ENCODE measurements at regions of chr14 and their contacts with region 1.

Region 1: GRCh38 chr14:34982417-34983147 is at the start of gene SRP54:
- DNase-seq: peak; percentile 97
- ATAC-seq: peak; percentile 91
- H3K4me3 Mint-ChIP-seq: no peak within 1 kb of the TSS
- H3K27ac Mint-ChIP-seq: no peak within 1 kb of the TSS
- H3K4me1 Mint-ChIP-seq: peaks cover 22% of the 10 kb centered on the region
- H3K27me3 Mint-ChIP-seq: no peaks in the 10 kb centered on the region
- CTCF ChIP-seq: no peak
- total RNA-seq, gene SRP54: 51.2 and 54.7 TPM in 2 replicates

Region 2: DNA sequence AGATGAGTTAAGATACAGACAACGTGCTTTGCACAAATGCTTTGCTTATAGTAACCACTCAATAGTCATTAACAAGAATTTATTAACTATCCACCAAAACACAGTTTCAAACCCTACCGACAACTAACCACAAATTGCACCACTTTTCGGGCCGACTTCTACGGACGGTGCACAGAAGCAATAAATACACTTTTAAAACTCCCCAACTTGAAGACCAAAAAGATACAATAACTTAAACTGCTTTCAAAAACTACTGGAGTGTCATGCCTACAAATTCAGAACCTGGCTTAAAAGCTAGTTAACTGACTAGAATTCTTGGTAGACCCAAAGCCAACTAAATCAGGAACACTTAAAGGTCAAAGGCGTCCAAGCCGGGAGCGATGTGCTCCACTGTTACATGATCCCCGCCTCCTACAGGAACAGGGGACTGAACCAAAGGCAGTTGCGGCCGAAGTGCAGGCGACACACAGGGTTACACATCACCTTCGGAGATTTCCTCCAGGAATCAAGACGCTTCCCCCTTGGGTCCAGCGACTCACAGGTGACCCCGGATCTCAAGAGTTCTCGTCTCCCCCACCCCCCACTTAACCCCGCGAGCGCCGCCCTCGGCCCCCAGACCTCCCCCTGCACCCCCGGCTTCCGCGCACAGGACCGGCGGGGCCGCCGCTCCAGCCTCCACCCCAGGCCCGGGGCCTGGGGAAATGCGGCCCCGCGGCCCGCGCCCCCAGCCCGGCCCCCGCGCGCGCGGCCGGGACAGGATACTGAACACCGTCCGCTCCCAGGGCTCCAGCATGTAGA is 521.0 kb before region 1 on chr14:
- CTCF ChIA-PET with region 1: no interaction called
- POLR2A ChIA-PET with region 1: no interaction called
- intact Hi-C with region 1: loop called (anchors 2 kb)
- DNase-seq: no peak
- ATAC-seq: no peak
- H3K4me3 Mint-ChIP-seq: peak overlapping the region; percentile 88
- H3K27ac Mint-ChIP-seq: peak overlapping the region; percentile 76
- H3K4me1 Mint-ChIP-seq: peaks cover 15% of the 10 kb centered on the region
- H3K27me3 Mint-ChIP-seq: no peaks in the 10 kb centered on the region
- CTCF ChIP-seq: no peak

Region 3: DNA sequence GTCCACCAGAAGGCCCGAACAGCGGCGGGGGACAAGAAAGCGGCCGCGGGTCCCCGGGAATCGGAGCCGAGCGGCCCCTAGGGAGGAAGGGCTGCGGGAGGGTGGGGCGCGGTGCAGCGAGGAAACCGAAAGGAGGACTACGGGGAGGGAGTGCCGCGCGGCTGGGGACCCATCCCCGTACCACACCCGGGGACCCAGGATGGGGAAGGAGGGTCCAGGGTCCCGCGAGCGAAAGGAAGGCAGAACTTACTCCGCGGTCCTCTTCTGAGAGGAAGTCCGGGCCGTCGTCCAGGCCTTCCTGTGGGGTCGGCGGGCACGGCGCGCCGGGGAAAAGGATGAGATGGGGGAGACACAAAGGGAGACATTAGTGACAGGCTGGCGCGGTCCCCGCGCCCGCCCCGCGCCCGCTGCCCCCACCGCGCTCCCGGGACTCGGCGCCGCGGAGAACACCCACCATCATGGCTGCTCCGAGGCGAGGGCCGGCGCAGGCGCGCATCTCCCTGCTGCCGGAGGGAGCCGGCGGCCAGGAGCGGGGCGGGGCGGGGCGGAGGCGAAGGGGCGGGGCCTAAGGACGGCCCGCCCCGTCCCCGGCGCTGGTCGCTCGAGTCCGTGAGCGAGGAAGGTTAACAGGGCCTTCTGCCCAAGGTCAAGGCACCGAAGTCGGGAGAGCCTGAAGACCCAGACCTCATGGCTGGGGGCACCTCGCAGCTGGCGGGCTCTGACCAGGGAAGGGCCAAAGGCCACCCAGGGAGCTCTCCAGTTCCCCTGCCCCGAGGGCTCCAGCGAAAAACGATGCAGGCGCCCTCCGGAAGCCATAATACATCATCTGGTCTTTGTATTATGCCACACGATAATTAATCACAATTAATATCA is 352.7 kb before region 1 on chr14 and contains the start of gene SNX6:
- CTCF ChIA-PET with region 1: no interaction called
- POLR2A ChIA-PET with region 1: no interaction called
- intact Hi-C with region 1: loop called (anchors 2 kb)
- DNase-seq: peak; percentile 77
- ATAC-seq: peak; percentile 98
- H3K4me3 Mint-ChIP-seq: peak within 1 kb of the TSS; percentile 97
- H3K27ac Mint-ChIP-seq: peak within 1 kb of the TSS; percentile 93
- H3K4me1 Mint-ChIP-seq: peaks cover 10% of the 10 kb centered on the region
- H3K27me3 Mint-ChIP-seq: peaks cover 3% of the 10 kb centered on the region
- CTCF ChIP-seq: no peak
- total RNA-seq, gene SNX6: 56.0 and 61.0 TPM in 2 replicates

Region 4: GRCh38 chr14:34714320-34715126 is 268.1 kb before region 1 on chr14 and contains the start of gene CFL2:
- CTCF ChIA-PET with region 1: no interaction called
- POLR2A ChIA-PET with region 1: interaction called, 5 read pairs
- intact Hi-C with region 1: loop called (anchors 1 kb)
- DNase-seq: peak; percentile 80
- ATAC-seq: peak; percentile 90
- H3K4me3 Mint-ChIP-seq: peak within 1 kb of the TSS; percentile 92
- H3K27ac Mint-ChIP-seq: peak within 1 kb of the TSS; percentile 89
- H3K4me1 Mint-ChIP-seq: peaks cover 32% of the 10 kb centered on the region
- H3K27me3 Mint-ChIP-seq: no peaks in the 10 kb centered on the region
- CTCF ChIP-seq: no peak
- total RNA-seq, gene CFL2: 19.1 and 20.8 TPM in 2 replicates

Region 5: DNA sequence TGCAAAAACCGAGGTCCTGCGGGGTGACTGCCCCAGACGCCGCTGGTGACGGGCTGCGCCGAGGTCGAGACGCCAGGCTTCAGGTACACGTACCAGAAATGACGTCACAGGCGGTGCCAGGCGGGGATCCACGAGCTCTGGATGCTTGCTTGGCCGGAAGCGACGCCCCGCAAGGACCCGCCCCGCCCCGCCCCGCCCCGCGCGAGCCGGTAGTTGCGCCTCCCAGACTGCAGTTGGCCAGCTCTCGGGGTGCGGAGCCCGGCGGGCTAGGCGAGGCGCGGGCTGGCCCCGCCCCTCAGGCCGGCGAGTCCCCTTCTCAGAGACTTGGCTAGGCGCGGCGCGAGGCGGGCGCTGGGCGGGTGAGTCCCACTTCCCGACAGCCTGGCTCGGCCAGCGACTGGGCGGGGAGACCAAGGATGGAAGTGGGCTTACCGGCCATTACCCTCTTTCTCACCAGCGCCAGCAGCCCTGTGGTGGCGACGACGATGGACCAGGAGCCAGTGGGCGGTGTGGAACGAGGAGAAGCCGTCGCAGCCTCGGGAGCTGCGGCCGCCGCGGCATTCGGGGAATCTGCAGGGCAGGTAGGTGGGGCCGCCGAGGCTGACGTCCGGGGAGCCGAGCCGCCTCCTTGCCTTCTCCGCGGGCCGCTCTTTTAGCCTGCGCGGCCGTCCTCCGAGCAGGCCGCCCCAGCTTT is 63.6 kb after region 1 on chr14 and contains the start of gene FAM177A1:
- CTCF ChIA-PET with region 1: interaction called, 3 read pairs
- POLR2A ChIA-PET with region 1: interaction called, 53 read pairs
- intact Hi-C with region 1: loop called (anchors 1 kb)
- DNase-seq: peak; percentile 93
- ATAC-seq: peak; percentile 94
- H3K4me3 Mint-ChIP-seq: peak within 1 kb of the TSS; percentile 96
- H3K27ac Mint-ChIP-seq: peak within 1 kb of the TSS; percentile 97
- H3K4me1 Mint-ChIP-seq: peaks cover 28% of the 10 kb centered on the region
- H3K27me3 Mint-ChIP-seq: no peaks in the 10 kb centered on the region
- CTCF ChIP-seq: no peak
- total RNA-seq, gene FAM177A1: 23.5 and 27.4 TPM in 2 replicates

Region 6: GRCh38 chr14:35285168-35286002 is 302.8 kb after region 1 on chr14:
- CTCF ChIA-PET with region 1: no interaction called
- POLR2A ChIA-PET with region 1: no interaction called
- intact Hi-C with region 1: loop called (anchors 1 kb)
- DNase-seq: no peak
- ATAC-seq: peak; percentile 81
- H3K4me3 Mint-ChIP-seq: peak overlapping the region; percentile 80
- H3K27ac Mint-ChIP-seq: peak overlapping the region; percentile 90
- H3K4me1 Mint-ChIP-seq: peaks cover 52% of the 10 kb centered on the region
- H3K27me3 Mint-ChIP-seq: no peaks in the 10 kb centered on the region
- CTCF ChIP-seq: no peak

Region 7: GRCh38 chr14:35808076-35808652 is 825.6 kb after region 1 on chr14:
- CTCF ChIA-PET with region 1: no interaction called
- POLR2A ChIA-PET with region 1: no interaction called
- intact Hi-C with region 1: loop called (anchors 1 kb)
- DNase-seq: no peak
- ATAC-seq: no peak
- H3K4me3 Mint-ChIP-seq: peak overlapping the region; percentile 95
- H3K27ac Mint-ChIP-seq: peak overlapping the region; percentile 87
- H3K4me1 Mint-ChIP-seq: peaks cover 31% of the 10 kb centered on the region
- H3K27me3 Mint-ChIP-seq: no peaks in the 10 kb centered on the region
- CTCF ChIP-seq: no peak